Psoas muscle (tissue), 8 donors: ENCODE measurements at regions of chr3 and their contacts with region 1.

Region 1: GRCh38 chr3:45123581-45124269 is 22.5 kb downstream of the CDCP1 start:
- DNase-seq: no peak
- ATAC-seq: peak; percentile 65 to 71 (median 68)
- H3K4me3 ChIP-seq: no peak overlapping the region
- H3K27ac ChIP-seq: peak overlapping the region; percentile 89
- H3K4me1 ChIP-seq: peaks cover 46% of the 10 kb centered on the region
- H3K27me3 ChIP-seq: no peaks in the 10 kb centered on the region
- CTCF ChIP-seq: no peak

Region 2: GRCh38 chr3:45055411-45056143 is 68.1 kb before region 1 on chr3:
- intact Hi-C with region 1: loop called in 1 of 2 experiments (anchors 5 kb)
- DNase-seq: no peak
- ATAC-seq: peak; percentile 44 to 70 (median 63)
- H3K4me3 ChIP-seq: no peak overlapping the region
- H3K27ac ChIP-seq: peak overlapping the region; percentile 77
- H3K4me1 ChIP-seq: peaks cover 36% of the 10 kb centered on the region
- H3K27me3 ChIP-seq: no peaks in the 10 kb centered on the region
- CTCF ChIP-seq: no peak

Region 3: DNA sequence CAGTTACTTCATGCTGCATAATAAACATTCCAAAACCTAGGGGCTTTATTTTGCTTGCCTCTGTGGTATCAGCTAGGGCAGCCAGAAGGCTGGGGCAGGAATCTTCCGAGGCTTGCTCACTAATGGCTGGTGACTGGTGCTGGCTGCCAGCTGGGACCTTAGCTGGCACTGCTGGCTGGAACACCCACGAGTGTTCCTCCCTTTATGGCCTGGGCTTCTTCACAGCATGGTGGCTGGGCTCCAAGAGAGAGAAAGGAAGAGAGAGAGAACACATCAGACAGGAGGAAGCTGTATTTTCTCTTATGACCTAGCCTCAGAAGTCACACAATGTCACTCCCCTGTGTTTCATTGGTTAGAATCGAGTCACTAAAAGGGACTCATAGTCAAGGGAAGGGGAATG is 46.4 kb after region 1 on chr3:
- intact Hi-C with region 1: loop called in 1 of 2 experiments (anchors 5 kb)
- DNase-seq: peak in 1 of 2 donors; percentile 77
- ATAC-seq: peak; percentile 53 to 93 (median 80)
- H3K4me3 ChIP-seq: no peak overlapping the region
- H3K27ac ChIP-seq: peak overlapping the region; percentile 74
- H3K4me1 ChIP-seq: peaks cover 17% of the 10 kb centered on the region
- H3K27me3 ChIP-seq: no peaks in the 10 kb centered on the region
- CTCF ChIP-seq: no peak

Region 4: GRCh38 chr3:45182915-45183867 is 59.5 kb after region 1 on chr3:
- intact Hi-C with region 1: loop called in 1 of 2 experiments (anchors 2 kb)
- DNase-seq: peak in 1 of 2 donors; percentile 31
- ATAC-seq: peak; percentile 69 to 88 (median 80)
- H3K4me3 ChIP-seq: no peak overlapping the region
- H3K27ac ChIP-seq: peak overlapping the region; percentile 72
- H3K4me1 ChIP-seq: peaks cover 18% of the 10 kb centered on the region
- H3K27me3 ChIP-seq: peaks cover 0 to 3% (median 0%) of the 10 kb centered on the region in 3 donors
- CTCF ChIP-seq: no peak